OCI-LY7 (cell line): ENCODE measurements at regions of chr6 and their contacts with region 1.

Region 1: GRCh38 chr6:26270903-26271667 is 93.9 kb upstream of the BTN3A2 start:
- DNase-seq: peak; percentile 98
- H3K4me3 ChIP-seq: peak overlapping the region; percentile 87
- H3K27ac ChIP-seq: peak overlapping the region; percentile 99
- H3K4me1 ChIP-seq: peaks cover 42% of the 10 kb centered on the region
- CTCF ChIP-seq: no peak; the same call in 1 of the 2 replicates

Region 2: GRCh38 chr6:26031595-26032339 is 239.3 kb before region 1 on chr6:
- CTCF ChIA-PET with region 1: no interaction called
- POLR2A ChIA-PET with region 1: interaction called, 35 read pairs
- intact Hi-C with region 1: loop called (anchors 2 kb)
- DNase-seq: peak; percentile 99
- H3K4me3 ChIP-seq: peak overlapping the region; percentile 78
- H3K27ac ChIP-seq: peak overlapping the region; percentile 99
- H3K4me1 ChIP-seq: peaks cover 74% of the 10 kb centered on the region
- CTCF ChIP-seq: 0 out of 2 replicates have a peak, but pooled peaks have one; percentile 33

Region 3: GRCh38 chr6:26136321-26136720 is 134.8 kb before region 1 on chr6:
- CTCF ChIA-PET with region 1: no interaction called
- POLR2A ChIA-PET with region 1: no interaction called
- intact Hi-C with region 1: no loop called
- DNase-seq: no peak
- H3K4me3 ChIP-seq: no peak overlapping the region
- H3K27ac ChIP-seq: no peak overlapping the region
- H3K4me1 ChIP-seq: peaks cover 9% of the 10 kb centered on the region
- CTCF ChIP-seq: no peak

Region 4: GRCh38 chr6:26156076-26156849 is 114.8 kb before region 1 on chr6:
- CTCF ChIA-PET with region 1: no interaction called
- POLR2A ChIA-PET with region 1: interaction called, 29 read pairs
- intact Hi-C with region 1: loop called (anchors 2 kb)
- DNase-seq: peak; percentile 88
- H3K4me3 ChIP-seq: peak overlapping the region; percentile 79
- H3K27ac ChIP-seq: peak overlapping the region; percentile 99
- H3K4me1 ChIP-seq: peaks cover 28% of the 10 kb centered on the region
- CTCF ChIP-seq: no peak

Region 5: DNA sequence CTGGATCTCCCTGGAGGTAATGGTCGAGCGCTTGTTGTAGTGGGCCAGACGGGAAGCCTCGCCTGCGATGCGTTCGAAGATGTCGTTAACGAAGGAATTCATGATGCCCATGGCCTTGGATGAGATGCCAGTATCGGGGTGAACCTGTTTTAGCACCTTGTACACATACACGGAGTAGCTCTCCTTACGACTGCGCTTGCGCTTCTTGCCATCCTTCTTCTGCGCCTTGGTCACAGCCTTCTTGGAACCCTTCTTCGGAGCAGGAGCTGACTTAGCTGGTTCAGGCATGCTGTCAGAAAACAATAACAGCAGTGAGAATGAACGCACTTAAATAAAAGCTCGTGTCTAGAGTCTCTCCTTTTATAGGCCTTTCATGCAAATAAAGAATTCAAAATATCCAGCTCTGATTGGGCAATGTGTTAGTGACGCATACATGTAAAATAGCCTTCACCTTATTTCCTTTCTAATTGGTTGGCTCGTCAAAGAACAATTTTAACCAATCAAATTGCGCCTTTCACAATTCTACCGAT is 54.7 kb before region 1 on chr6:
- CTCF ChIA-PET with region 1: interaction called, 3 read pairs
- POLR2A ChIA-PET with region 1: interaction called, 267 read pairs
- intact Hi-C with region 1: loop called (anchors 1 kb)
- DNase-seq: peak; percentile 98
- H3K4me3 ChIP-seq: peak overlapping the region; percentile 79
- H3K27ac ChIP-seq: peak overlapping the region; percentile 99
- H3K4me1 ChIP-seq: peaks cover 63% of the 10 kb centered on the region
- CTCF ChIP-seq: no peak

Region 6: DNA sequence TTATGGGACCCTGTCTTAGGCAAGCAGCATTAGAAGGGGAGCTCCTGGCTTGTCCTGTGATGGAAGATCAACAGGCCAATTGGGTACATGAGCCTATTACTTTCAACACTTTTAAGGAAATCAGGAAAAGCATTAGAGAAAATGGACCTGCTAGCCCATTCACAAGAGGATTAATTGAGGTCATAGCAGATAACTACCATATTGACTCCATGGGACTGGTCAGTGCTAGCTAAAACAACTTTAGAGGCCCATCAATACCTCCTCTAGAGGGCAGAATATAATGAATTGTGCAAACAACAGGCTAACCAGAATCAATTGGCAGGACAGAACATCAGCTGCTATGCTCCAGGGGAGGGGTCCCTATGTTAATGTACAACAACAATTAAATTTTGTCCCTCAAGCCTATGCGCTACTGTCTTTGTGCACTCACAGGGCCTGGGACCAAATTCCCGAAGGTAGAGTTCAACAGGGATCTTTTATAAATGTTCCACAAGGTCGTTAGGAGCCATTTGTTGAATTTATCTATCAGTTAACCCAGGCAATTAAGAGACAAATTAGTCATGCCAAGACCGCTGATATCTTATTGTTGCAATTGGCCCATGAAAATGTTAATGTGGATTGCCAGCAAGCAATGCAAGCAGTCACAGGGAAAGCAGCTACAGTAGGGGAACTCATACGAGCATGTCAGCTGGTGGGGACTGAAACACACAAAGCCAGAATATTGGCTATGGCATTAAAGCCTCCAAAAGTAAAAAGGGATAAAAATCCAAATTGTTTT is 12.7 kb before region 1 on chr6:
- CTCF ChIA-PET with region 1: interaction called, 3 read pairs
- POLR2A ChIA-PET with region 1: interaction called, 28 read pairs
- intact Hi-C with region 1: no loop called
- DNase-seq: peak; percentile 33
- H3K4me3 ChIP-seq: no peak overlapping the region
- H3K27ac ChIP-seq: no peak overlapping the region
- H3K4me1 ChIP-seq: peaks cover 12% of the 10 kb centered on the region
- CTCF ChIP-seq: peak; percentile 70

Region 7: DNA sequence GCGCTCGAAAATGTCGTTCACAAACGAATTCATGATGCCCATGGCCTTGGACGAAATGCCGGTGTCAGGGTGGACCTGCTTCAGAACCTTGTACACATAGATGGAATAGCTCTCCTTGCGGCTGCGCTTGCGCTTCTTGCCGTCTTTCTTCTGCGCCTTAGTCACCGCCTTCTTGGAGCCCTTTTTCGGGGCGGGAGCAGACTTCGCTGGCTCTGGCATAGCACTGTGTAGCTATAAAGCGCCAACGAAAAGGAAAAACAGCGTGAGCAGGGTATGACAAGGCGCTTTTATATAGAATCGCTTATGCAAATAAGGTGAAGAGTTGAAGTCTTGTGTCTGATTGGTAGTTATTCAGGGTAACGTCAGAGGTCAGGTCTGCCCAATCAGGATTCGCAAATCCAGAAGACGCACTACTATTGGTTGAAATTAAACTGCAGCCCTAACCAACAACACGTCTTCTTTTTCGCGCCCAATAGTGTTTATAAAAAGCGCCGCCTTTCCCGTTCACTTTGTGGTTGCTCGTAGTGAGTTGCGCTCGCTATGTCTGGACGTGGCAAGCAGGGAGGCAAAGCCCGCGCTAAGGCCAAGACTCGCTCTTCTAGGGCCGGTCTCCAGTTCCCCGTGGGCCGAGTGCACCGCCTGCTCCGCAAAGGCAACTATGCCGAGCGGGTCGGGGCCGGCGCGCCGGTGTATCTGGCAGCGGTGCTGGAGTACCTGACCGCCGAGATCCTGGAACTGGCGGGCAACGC is 861.6 kb after region 1 on chr6:
- CTCF ChIA-PET with region 1: no interaction called
- POLR2A ChIA-PET with region 1: interaction called, 8 read pairs
- intact Hi-C with region 1: loop called (anchors 1 kb)
- DNase-seq: peak; percentile 98
- H3K4me3 ChIP-seq: peak overlapping the region; percentile 79
- H3K27ac ChIP-seq: peak overlapping the region; percentile 99
- H3K4me1 ChIP-seq: peaks cover 74% of the 10 kb centered on the region
- CTCF ChIP-seq: no peak

Region 8: DNA sequence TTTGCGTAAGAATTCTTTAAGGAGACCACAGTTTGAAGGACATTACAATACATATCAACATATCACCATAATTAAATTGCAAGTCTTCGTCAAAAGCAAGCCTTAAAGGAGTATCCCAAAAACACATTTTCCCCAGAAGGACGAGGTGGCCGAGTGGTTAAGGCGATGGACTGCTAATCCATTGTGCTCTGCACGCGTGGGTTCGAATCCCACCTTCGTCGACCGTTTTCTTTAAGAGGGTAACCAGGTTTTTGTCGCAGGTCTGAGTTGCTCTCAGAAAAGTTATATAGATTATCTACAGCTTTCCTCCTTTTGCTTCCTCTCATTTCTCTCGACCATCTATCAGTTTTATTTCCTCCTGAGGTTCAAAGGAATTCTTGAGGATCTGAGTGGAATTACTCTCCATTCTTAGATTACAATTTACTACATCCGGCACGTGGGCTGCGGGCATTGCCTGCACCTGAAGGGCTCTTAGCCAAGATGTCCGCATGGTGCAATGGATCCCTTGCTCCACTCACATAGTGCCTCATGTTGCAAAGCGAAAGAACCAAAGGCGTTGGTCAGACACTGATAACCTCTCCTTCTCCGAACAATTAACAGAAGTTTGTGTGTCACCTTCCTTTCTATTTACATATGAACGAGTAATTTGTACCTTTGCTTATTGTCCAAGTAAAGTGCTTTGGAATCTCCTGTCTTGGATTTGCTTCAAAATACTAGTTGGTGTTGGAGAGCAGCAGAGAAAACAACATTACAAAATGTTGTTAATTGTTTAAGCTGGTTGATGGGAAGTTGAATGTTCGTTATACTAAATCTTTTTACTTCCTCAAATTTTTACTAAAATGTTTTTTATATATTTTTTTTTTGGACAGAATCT is 1027.0 kb after region 1 on chr6:
- CTCF ChIA-PET with region 1: no interaction called
- POLR2A ChIA-PET with region 1: no interaction called
- intact Hi-C with region 1: no loop called
- DNase-seq: no peak
- H3K4me3 ChIP-seq: no peak overlapping the region
- H3K27ac ChIP-seq: no peak overlapping the region
- H3K4me1 ChIP-seq: no peaks in the 10 kb centered on the region
- CTCF ChIP-seq: no peak

Region 9: GRCh38 chr6:27864906-27865849 is 1594.1 kb after region 1 on chr6:
- CTCF ChIA-PET with region 1: no interaction called
- POLR2A ChIA-PET with region 1: interaction called, 14 read pairs
- intact Hi-C with region 1: loop called (anchors 2 kb)
- DNase-seq: peak; percentile 99
- H3K4me3 ChIP-seq: peak overlapping the region; percentile 67
- H3K27ac ChIP-seq: peak overlapping the region; percentile 99
- H3K4me1 ChIP-seq: peaks cover 60% of the 10 kb centered on the region
- CTCF ChIP-seq: no peak